Activated B cell treated with CpG ODN at 0.5 μM for 24 hours (primary cell): ENCODE measurements at regions of chr1 and their contacts with region 1.

Region 1: GRCh38 chr1:161885003-161885402 is 118.9 kb downstream of the ATF6 start:
- DNase-seq: no peak
- ATAC-seq: no peak
- H3K4me3 Mint-ChIP-seq: no peak overlapping the region
- H3K27ac Mint-ChIP-seq: no peak overlapping the region
- H3K4me1 Mint-ChIP-seq: no peaks in the 10 kb centered on the region
- H3K27me3 Mint-ChIP-seq: no peaks in the 10 kb centered on the region
- CTCF ChIP-seq: no peak

Region 2: GRCh38 chr1:161864577-161864976 is 20.4 kb before region 1 on chr1:
- CTCF ChIA-PET with region 1: no interaction called
- POLR2A ChIA-PET with region 1: no interaction called
- intact Hi-C with region 1: loop called (anchors 2 kb)
- DNase-seq: no peak
- ATAC-seq: no peak
- H3K4me3 Mint-ChIP-seq: no peak overlapping the region
- H3K27ac Mint-ChIP-seq: no peak overlapping the region
- H3K4me1 Mint-ChIP-seq: no peaks in the 10 kb centered on the region
- H3K27me3 Mint-ChIP-seq: no peaks in the 10 kb centered on the region
- CTCF ChIP-seq: no peak